ENCODE measurements at regions of chr1 and their contacts with region 1.

Region 1: DNA sequence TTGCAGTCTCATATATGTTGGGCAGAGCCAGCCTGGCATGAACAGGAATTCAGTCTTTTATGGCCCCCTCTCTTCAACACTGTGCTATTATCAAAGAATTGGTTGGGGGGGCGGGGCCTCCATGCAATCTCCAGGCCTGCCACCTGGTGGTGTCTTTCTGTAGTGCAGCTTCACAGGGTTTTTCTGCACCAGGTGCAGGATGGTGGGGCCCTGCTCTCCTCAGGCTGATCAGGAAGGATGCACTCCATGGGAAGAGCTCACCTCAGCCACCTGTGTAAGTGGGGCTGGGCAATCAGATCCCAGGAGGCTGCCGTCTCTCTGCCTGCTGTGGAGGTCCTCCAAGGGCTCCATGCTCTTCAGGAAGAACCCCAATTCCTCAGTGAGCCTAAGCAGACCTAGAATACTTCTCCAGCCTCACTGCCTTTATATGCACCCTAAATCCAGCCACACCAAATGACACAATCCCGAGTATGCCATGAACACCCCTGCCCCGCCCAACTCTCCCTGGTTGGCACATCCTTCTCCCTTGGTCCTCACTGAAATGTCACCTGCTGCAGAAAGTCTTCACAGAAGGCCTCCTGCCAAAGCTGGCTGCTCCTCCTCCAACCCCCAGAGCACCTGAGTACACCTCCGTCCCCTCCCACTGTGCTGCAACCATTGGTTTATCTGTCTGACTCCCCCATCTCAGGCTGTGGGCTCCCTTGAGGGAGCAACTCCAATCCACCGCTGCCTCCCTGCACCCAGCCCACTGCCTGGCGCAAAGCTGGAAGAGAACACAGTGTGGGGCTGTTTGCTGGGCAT is 16.5 kb downstream of the STK40 start:
- DNase-seq: peak; percentile 89
- ATAC-seq: peak; percentile 63
- H3K4me3 ChIP-seq: no peak overlapping the region
- H3K4me3 Mint-ChIP-seq: peak overlapping the region; percentile 16
- H3K27ac ChIP-seq: no peak overlapping the region
- H3K27ac Mint-ChIP-seq: peak overlapping the region; percentile 83
- H3K4me1 ChIP-seq: peaks cover 66 to 84% of the 10 kb centered on the region in 2 donors
- H3K4me1 Mint-ChIP-seq: peaks cover 76% of the 10 kb centered on the region
- H3K27me3 ChIP-seq: no peaks in the 10 kb centered on the region
- H3K27me3 Mint-ChIP-seq: no peaks in the 10 kb centered on the region
- CTCF ChIP-seq: peak; percentile 88

Region 2: GRCh38 chr1:34825455-34826091 is 1543.7 kb before region 1 on chr1:
- CTCF ChIA-PET with region 1: no interaction called
- POLR2A ChIA-PET with region 1: no interaction called
- intact Hi-C with region 1: no loop called
- DNase-seq: no peak
- ATAC-seq: no peak
- H3K4me3 ChIP-seq: no peak overlapping the region
- H3K4me3 Mint-ChIP-seq: no peak overlapping the region
- H3K27ac ChIP-seq: no peak overlapping the region
- H3K27ac Mint-ChIP-seq: no peak overlapping the region
- H3K4me1 ChIP-seq: no peaks in the 10 kb centered on the region
- H3K4me1 Mint-ChIP-seq: peaks cover 9% of the 10 kb centered on the region
- H3K27me3 ChIP-seq: no peaks in the 10 kb centered on the region
- H3K27me3 Mint-ChIP-seq: no peaks in the 10 kb centered on the region
- CTCF ChIP-seq: no peak

Region 3: GRCh38 chr1:36051821-36052220 is 317.4 kb before region 1 on chr1:
- CTCF ChIA-PET with region 1: no interaction called
- POLR2A ChIA-PET with region 1: no interaction called
- intact Hi-C with region 1: no loop called
- DNase-seq: no peak
- ATAC-seq: no peak
- H3K4me3 ChIP-seq: no peak overlapping the region
- H3K4me3 Mint-ChIP-seq: no peak overlapping the region
- H3K27ac ChIP-seq: no peak overlapping the region
- H3K27ac Mint-ChIP-seq: no peak overlapping the region
- H3K4me1 ChIP-seq: no peaks in the 10 kb centered on the region
- H3K4me1 Mint-ChIP-seq: no peaks in the 10 kb centered on the region
- H3K27me3 ChIP-seq: no peaks in the 10 kb centered on the region
- H3K27me3 Mint-ChIP-seq: no peaks in the 10 kb centered on the region
- CTCF ChIP-seq: no peak

Region 4: DNA sequence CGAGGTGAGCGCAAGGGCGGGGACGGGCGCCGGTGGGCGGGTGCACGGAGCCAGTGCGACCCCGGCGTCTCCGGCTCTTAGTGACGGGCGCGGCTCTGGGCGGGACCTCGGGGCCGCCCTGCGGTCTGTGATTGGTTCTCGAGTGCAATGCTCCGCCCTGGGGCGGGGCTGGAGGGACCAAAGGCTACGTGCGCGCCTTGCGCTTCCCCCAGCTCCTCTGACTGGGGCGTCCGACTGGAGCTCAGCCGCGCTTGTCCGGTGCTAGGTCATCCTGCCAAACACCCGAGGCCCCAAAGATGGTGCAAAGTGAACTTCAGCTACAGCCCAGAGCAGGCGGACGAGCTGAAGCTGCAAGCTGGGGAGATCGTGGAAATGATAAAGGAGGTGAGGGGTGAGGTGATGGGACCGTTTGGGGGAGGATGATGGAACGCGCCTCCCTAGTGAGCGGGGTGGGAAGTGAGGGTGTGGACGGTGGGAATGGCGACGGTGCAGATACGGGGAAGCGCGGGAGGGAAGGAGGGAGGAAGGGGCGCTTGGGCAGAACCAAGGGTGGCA is 62.3 kb before region 1 on chr1:
- CTCF ChIA-PET with region 1: interaction called, 15 read pairs
- POLR2A ChIA-PET with region 1: interaction called, 3 read pairs
- intact Hi-C with region 1: loop called (anchors 5 kb)
- DNase-seq: peak; percentile 96
- ATAC-seq: peak; percentile 98
- H3K4me3 ChIP-seq: peak overlapping the region; percentile 9 to 78 (median 68)
- H3K4me3 Mint-ChIP-seq: peak overlapping the region; percentile 97
- H3K27ac ChIP-seq: peak overlapping the region in 1 of 2 donors; percentile 63
- H3K27ac Mint-ChIP-seq: peak overlapping the region; percentile 93
- H3K4me1 ChIP-seq: peaks cover 10 to 33% of the 10 kb centered on the region in 2 donors
- H3K4me1 Mint-ChIP-seq: peaks cover 29% of the 10 kb centered on the region
- H3K27me3 ChIP-seq: no peaks in the 10 kb centered on the region
- H3K27me3 Mint-ChIP-seq: no peaks in the 10 kb centered on the region
- CTCF ChIP-seq: no peak

Region 5: GRCh38 chr1:36323597-36324352 is 45.5 kb before region 1 on chr1 and contains the start of gene EVA1B:
- CTCF ChIA-PET with region 1: interaction called, 4 read pairs
- POLR2A ChIA-PET with region 1: interaction called, 3 read pairs
- intact Hi-C with region 1: loop called (anchors 5 kb)
- DNase-seq: peak; percentile 49
- ATAC-seq: peak; percentile 46
- H3K4me3 ChIP-seq: peak within 1 kb of the TSS; percentile 35 to 78 (median 63)
- H3K4me3 Mint-ChIP-seq: peak within 1 kb of the TSS; percentile 84
- H3K27ac ChIP-seq: no peak within 1 kb of the TSS
- H3K27ac Mint-ChIP-seq: peak within 1 kb of the TSS; percentile 26
- H3K4me1 ChIP-seq: peaks cover 33 to 40% of the 10 kb centered on the region in 2 donors
- H3K4me1 Mint-ChIP-seq: peaks cover 32% of the 10 kb centered on the region
- H3K27me3 ChIP-seq: peaks cover 0 to 36% (median 12%) of the 10 kb centered on the region in 4 experiments
- H3K27me3 Mint-ChIP-seq: peaks cover 28% of the 10 kb centered on the region
- CTCF ChIP-seq: no peak
- total RNA-seq, gene EVA1B: 1.4 and 2.9 TPM in 2 replicates

Region 6: DNA sequence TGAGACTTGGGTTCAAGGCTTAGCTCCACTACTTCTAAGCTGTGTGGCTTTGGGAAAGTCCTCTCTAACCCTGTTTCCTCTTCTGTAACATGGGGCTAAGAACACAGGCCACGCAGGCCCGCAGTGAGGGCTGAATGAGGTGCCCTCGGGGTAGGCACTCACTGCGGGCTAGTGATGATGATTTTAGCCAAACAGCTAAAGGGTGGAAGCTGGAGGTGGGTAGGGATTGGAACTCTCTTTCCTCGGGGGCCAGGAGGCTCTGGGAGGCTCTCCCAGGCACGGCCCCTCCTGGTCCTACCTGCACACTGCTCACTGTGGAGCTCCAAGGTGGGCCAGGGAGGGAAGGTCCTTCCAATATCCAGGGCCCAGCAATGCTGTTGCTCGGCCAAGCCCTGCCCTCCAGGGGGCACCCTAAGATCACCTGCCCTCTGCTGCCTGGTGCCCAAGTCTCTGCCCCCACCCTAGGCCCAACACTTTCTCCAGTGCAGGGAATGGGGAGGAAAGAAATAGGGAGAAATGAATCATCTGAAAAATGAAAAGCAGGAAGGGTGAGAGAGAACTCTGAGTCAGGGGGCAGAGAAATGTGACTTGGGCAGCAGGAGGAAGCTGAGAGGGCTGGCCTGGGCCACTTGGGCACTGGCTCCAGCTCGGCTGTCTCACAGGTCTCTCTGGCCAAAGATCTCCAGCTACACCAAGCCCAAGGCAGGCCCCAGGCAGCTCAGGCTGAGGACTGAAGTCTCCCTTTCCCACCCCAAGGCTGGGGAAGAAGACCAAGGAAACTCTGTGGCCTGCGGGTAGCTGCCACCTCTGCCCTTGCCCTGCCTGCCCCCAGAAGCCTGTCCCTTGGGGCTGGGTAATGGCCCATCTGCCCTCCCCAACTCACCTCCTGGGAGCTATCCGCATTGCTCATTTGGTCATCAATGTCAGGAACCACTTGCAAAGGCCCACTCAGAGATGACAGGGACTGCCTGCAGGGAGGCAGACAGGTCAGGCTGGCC is 26.5 kb before region 1 on chr1:
- CTCF ChIA-PET with region 1: interaction called, 41 read pairs
- POLR2A ChIA-PET with region 1: interaction called, 3 read pairs
- intact Hi-C with region 1: loop called (anchors 2 kb)
- DNase-seq: peak; percentile 71
- ATAC-seq: peak; percentile 76
- H3K4me3 ChIP-seq: no peak overlapping the region
- H3K4me3 Mint-ChIP-seq: no peak overlapping the region
- H3K27ac ChIP-seq: no peak overlapping the region
- H3K27ac Mint-ChIP-seq: no peak overlapping the region
- H3K4me1 ChIP-seq: peaks cover 0 to 5% of the 10 kb centered on the region in 2 donors
- H3K4me1 Mint-ChIP-seq: peaks cover 10% of the 10 kb centered on the region
- H3K27me3 ChIP-seq: no peaks in the 10 kb centered on the region
- H3K27me3 Mint-ChIP-seq: no peaks in the 10 kb centered on the region
- CTCF ChIP-seq: peak; percentile 68

Region 7: DNA sequence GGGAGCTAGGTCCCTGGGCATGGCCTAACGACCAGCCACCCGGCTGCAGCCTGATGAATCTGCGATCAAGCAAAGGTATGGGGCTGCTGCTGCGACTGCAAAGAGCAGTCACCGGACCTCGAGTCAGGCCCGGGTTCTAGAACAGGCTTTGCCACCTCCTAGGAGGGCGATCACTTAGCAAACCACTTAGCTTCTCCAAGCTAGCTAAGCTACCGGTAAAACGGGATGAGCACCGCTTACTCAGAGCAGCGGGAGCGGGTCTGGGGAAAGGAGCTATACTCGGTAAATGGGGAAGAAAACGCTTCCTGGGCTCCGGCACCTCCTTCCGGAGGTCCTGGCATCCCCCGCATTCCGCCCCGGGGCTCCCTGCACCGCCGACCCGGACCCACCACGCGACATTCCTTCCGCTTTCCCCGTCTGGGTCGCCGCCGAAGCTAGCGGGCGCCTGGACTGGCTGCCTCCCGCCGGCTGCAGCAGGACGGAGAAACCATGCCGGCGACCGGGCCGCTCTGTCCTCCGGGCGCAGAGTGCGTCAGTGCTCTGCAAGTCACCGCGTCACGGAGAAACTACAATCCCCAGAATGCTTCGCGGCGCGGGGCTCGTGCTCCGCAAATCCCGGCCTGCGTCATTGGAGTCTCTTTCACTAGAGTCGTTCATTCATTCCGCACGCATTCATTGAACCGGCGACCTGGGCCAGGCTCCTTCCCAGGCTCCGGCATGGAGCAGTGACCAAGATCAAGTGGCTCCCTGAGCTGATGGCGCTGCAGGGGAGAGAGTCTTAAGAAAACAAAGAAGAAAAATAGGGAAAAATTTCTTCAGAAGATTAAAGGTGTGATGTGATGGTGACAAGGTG is 28.3 kb after region 1 on chr1 and contains the start of gene LSM10:
- CTCF ChIA-PET with region 1: interaction called, 52 read pairs
- POLR2A ChIA-PET with region 1: interaction called, 3 read pairs
- intact Hi-C with region 1: loop called (anchors 1 kb)
- DNase-seq: peak; percentile 93
- ATAC-seq: peak; percentile 88
- H3K4me3 ChIP-seq: peak within 1 kb of the TSS; percentile 76 to 99 (median 97)
- H3K4me3 Mint-ChIP-seq: peak within 1 kb of the TSS; percentile 92
- H3K27ac ChIP-seq: peak within 1 kb of the TSS; percentile 78 to 93
- H3K27ac Mint-ChIP-seq: peak within 1 kb of the TSS; percentile 94
- H3K4me1 ChIP-seq: peaks cover 20 to 47% of the 10 kb centered on the region in 2 donors
- H3K4me1 Mint-ChIP-seq: peaks cover 55% of the 10 kb centered on the region
- H3K27me3 ChIP-seq: no peaks in the 10 kb centered on the region
- H3K27me3 Mint-ChIP-seq: no peaks in the 10 kb centered on the region
- CTCF ChIP-seq: no peak
- total RNA-seq, gene LSM10: 70.6 and 73.5 TPM in 2 replicates

Region 8: GRCh38 chr1:36420836-36421664 is 51.8 kb after region 1 on chr1:
- CTCF ChIA-PET with region 1: interaction called, 15 read pairs
- POLR2A ChIA-PET with region 1: interaction called, 7 read pairs
- intact Hi-C with region 1: loop called (anchors 1 kb)
- DNase-seq: peak; percentile 88
- ATAC-seq: peak; percentile 100
- H3K4me3 ChIP-seq: no peak overlapping the region
- H3K4me3 Mint-ChIP-seq: no peak overlapping the region
- H3K27ac ChIP-seq: no peak overlapping the region
- H3K27ac Mint-ChIP-seq: peak overlapping the region; percentile 37
- H3K4me1 ChIP-seq: peaks cover 4 to 5% of the 10 kb centered on the region in 2 donors
- H3K4me1 Mint-ChIP-seq: peaks cover 8% of the 10 kb centered on the region
- H3K27me3 ChIP-seq: no peaks in the 10 kb centered on the region
- H3K27me3 Mint-ChIP-seq: no peaks in the 10 kb centered on the region
- CTCF ChIP-seq: peak; percentile 97